ENCODE measurements at regions of chr2 and their contacts with region 1.

Region 1: GRCh38 chr2:71157124-71157793 is 26.8 kb downstream of the MPHOSPH10 start:
- DNase-seq: peak; percentile 67
- H3K4me3 ChIP-seq: no peak overlapping the region
- H3K27ac ChIP-seq: no peak overlapping the region
- H3K4me1 ChIP-seq: no peaks in the 10 kb centered on the region
- CTCF ChIP-seq: peak; percentile 81

Region 2: DNA sequence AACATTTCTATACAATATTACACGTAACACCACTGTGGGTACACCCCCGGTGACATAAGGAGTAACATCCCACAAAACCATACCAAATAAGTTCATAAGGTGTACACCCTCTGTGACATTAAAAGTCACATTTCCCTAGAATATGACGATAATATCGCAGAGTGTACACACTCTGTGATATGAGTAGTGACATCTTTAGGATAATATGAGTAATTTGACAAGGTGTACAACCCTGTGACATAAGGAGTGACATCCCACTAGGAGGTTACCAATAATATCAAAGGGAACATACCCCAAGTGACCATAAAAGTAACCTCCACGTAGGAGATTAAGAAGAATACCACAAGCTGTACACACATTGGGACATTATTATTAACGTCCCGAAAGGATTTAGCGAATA is 138.6 kb before region 1 on chr2:
- CTCF ChIA-PET with region 1: interaction called, 7 read pairs
- POLR2A ChIA-PET with region 1: no interaction called
- intact Hi-C with region 1: loop called (anchors 2 kb)
- DNase-seq: no peak
- H3K4me3 ChIP-seq: no peak overlapping the region
- H3K27ac ChIP-seq: no peak overlapping the region
- H3K4me1 ChIP-seq: peaks cover 6% of the 10 kb centered on the region
- CTCF ChIP-seq: no peak

Region 3: GRCh38 chr2:71276311-71277146 is 119.3 kb after region 1 on chr2:
- CTCF ChIA-PET with region 1: no interaction called
- POLR2A ChIA-PET with region 1: no interaction called
- intact Hi-C with region 1: loop called (anchors 5 kb)
- DNase-seq: peak; percentile 91
- H3K4me3 ChIP-seq: peak overlapping the region; percentile 72
- H3K27ac ChIP-seq: no peak overlapping the region
- H3K4me1 ChIP-seq: peaks cover 24% of the 10 kb centered on the region
- CTCF ChIP-seq: 0 out of 2 replicates have a peak, but pooled peaks have one; percentile 8

Region 4: DNA sequence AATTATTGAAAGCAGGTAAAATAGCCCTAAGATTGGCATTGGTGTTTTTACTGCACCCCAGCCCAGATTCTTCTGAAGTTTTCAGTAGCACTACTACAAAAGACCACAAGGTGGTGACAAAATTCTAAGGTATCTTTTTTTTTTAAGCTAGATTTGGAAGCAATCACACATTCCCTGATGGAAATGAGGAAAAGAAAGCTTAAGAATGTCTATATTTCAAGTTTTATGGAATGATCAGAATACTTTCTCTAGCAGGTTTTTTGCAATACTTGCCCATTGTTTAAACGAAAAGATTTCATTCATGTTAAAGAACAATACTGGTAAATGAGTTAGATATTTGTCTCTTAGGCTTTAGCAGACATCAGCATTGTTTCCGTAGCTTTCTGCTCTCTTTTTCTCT is 142.2 kb after region 1 on chr2:
- CTCF ChIA-PET with region 1: no interaction called
- POLR2A ChIA-PET with region 1: no interaction called
- intact Hi-C with region 1: loop called (anchors 5 kb)
- DNase-seq: peak; percentile 45
- H3K4me3 ChIP-seq: no peak overlapping the region
- H3K27ac ChIP-seq: no peak overlapping the region
- H3K4me1 ChIP-seq: no peaks in the 10 kb centered on the region
- CTCF ChIP-seq: peak; percentile 95

Region 5: GRCh38 chr2:71510196-71510807 is 353.0 kb after region 1 on chr2:
- CTCF ChIA-PET with region 1: no interaction called
- POLR2A ChIA-PET with region 1: no interaction called
- intact Hi-C with region 1: loop called (anchors 1 kb)
- DNase-seq: peak; percentile 71
- H3K4me3 ChIP-seq: no peak overlapping the region
- H3K27ac ChIP-seq: no peak overlapping the region
- H3K4me1 ChIP-seq: no peaks in the 10 kb centered on the region
- CTCF ChIP-seq: peak; percentile 93